Endothelial cell of umbilical vein (primary cell): ENCODE measurements at regions of chr3 and their contacts with region 1.

Region 1: DNA sequence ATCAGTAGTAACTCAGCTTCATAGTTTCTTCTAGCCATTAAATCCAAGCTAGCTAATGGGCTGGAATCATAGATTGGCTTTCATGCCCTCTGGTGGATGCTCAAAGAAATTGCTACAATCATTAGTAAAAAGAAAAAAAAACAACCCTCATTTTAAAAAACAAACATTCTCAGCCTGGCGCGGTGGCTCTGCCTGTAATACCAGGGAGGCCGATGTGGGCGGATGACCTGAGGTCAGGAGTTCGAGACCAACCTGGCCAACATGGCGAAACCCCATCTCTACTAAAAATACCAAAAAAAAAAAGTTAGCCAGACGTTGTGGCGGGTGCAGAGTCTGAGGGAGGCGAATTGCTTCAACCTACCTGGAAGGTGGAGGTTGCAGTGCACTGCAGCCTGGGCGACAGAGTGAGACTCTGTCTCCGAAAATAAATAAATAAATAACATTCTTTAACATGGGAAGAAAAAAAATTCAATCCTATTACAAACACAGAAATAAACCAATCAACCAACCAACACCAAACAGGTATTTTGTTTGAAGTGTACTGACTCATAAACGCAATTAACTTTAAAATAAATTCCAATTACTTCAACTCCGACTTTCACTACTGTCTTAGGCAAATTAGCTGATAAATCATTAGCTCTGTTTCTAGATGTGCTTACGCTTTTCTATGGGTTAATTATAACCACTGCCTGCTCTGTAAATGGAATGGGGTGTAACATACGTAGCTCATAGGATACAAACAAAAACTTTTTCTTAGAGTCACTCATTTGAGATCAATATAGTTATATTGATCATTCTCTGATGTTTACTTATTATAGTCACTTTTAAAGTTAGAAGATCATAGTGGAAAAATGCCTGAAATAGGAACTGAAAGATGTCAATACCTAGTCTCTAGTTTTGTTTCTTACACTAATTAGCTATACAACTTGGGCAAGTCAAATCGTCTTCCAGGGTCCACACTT is 24.9 kb downstream of the TMEM207 start:
- DNase-seq: peak; percentile 76
- H3K4me3 ChIP-seq: no peak overlapping the region
- H3K27ac ChIP-seq: no peak overlapping the region
- H3K4me1 ChIP-seq: no peaks in the 10 kb centered on the region
- H3K27me3 ChIP-seq: peaks cover 0 to 2% of the 10 kb centered on the region in 2 experiments
- CTCF ChIP-seq: peak; percentile 52
- POLR2A ChIP-seq: no peak

Region 2: DNA sequence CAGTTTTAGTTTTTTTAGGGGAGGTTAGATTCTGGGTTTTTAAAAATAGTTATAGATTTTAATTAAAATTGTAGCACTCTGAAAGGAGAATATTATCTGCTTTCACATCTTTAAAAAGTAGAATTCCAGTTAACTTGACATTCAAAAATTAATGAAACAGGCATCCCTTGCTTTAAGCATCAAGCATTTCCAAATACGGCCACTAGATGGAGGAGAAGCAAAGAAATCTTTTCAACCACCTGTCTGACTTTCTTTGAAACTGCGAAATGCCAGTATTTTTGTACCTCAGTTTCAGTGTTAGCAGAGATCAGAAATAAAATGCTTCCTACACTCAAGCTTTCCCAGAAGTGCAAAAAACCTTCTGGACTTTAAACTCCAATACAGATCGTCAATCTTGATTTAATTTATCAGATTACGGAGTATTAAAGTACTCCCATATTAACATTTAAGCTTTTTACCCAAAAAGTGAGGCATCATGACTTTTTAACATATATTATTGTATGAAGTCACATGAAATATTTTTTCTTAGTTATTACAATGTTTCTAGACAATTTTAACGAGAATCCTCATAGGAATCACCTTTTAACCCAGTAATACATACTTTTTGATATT is 457.4 kb before region 1 on chr3:
- CTCF ChIA-PET with region 1: interaction called, 75 read pairs
- POLR2A ChIA-PET with region 1: no interaction called
- dilution Hi-C with region 1: no loop called
- intact Hi-C with region 1: no loop called
- DNase-seq: peak; percentile 71
- H3K4me3 ChIP-seq: no peak overlapping the region
- H3K27ac ChIP-seq: no peak overlapping the region
- H3K4me1 ChIP-seq: no peaks in the 10 kb centered on the region
- H3K27me3 ChIP-seq: no peaks in the 10 kb centered on the region
- CTCF ChIP-seq: peak; percentile 58 to 63
- POLR2A ChIP-seq: no peak

Region 3: GRCh38 chr3:190205739-190206138 is 219.0 kb before region 1 on chr3:
- CTCF ChIA-PET with region 1: interaction called, 12 read pairs
- POLR2A ChIA-PET with region 1: no interaction called
- dilution Hi-C with region 1: no loop called
- intact Hi-C with region 1: no loop called
- DNase-seq: no peak
- H3K4me3 ChIP-seq: no peak overlapping the region
- H3K27ac ChIP-seq: no peak overlapping the region
- H3K4me1 ChIP-seq: no peaks in the 10 kb centered on the region
- H3K27me3 ChIP-seq: peaks cover 0 to 2% of the 10 kb centered on the region in 2 experiments
- CTCF ChIP-seq: no peak
- POLR2A ChIP-seq: no peak

Region 4: GRCh38 chr3:190339130-190339529 is 85.6 kb before region 1 on chr3:
- CTCF ChIA-PET with region 1: interaction called, 15 read pairs
- POLR2A ChIA-PET with region 1: no interaction called
- dilution Hi-C with region 1: no loop called
- intact Hi-C with region 1: no loop called
- DNase-seq: peak; percentile 72
- H3K4me3 ChIP-seq: no peak overlapping the region
- H3K27ac ChIP-seq: peak overlapping the region; percentile 70
- H3K4me1 ChIP-seq: peaks cover 21% of the 10 kb centered on the region
- H3K27me3 ChIP-seq: no peaks in the 10 kb centered on the region
- CTCF ChIP-seq: no peak
- POLR2A ChIP-seq: no peak

Region 5: GRCh38 chr3:190384241-190384863 is 40.4 kb before region 1 on chr3:
- CTCF ChIA-PET with region 1: interaction called, 36 read pairs
- POLR2A ChIA-PET with region 1: no interaction called
- dilution Hi-C with region 1: no loop called
- intact Hi-C with region 1: loop called (anchors 1 kb)
- DNase-seq: peak; percentile 45
- H3K4me3 ChIP-seq: no peak overlapping the region
- H3K27ac ChIP-seq: no peak overlapping the region
- H3K4me1 ChIP-seq: peaks cover 12% of the 10 kb centered on the region
- H3K27me3 ChIP-seq: no peaks in the 10 kb centered on the region
- CTCF ChIP-seq: peak; percentile 8 to 12
- POLR2A ChIP-seq: no peak

Region 6: DNA sequence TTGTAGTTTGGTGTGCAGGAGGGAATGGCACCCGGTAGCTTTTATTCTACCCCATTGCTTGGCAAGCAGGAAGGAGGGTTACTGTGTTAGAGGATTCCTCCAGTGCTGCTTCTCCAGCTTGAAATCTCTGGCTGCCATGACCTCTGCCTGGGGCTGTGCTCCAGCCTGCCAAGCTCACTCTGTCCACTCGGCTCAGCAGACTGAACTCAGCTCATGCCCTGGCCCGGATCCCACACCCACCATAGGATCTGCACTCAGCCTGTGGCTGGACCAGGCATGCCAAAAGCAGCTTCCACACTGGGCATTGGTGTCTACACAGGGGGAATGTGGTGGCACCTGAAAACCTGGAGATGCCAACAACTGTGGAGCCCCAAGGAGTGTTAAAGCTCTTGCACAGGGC is 10.5 kb before region 1 on chr3:
- CTCF ChIA-PET with region 1: interaction called, 32 read pairs
- POLR2A ChIA-PET with region 1: no interaction called
- dilution Hi-C with region 1: no loop called
- intact Hi-C with region 1: no loop called
- DNase-seq: no peak
- H3K4me3 ChIP-seq: no peak overlapping the region
- H3K27ac ChIP-seq: no peak overlapping the region
- H3K4me1 ChIP-seq: no peaks in the 10 kb centered on the region
- H3K27me3 ChIP-seq: no peaks in the 10 kb centered on the region
- CTCF ChIP-seq: no peak
- POLR2A ChIP-seq: no peak